ENCODE measurements at regions of chr12 and their contacts with region 1.

Region 1: DNA sequence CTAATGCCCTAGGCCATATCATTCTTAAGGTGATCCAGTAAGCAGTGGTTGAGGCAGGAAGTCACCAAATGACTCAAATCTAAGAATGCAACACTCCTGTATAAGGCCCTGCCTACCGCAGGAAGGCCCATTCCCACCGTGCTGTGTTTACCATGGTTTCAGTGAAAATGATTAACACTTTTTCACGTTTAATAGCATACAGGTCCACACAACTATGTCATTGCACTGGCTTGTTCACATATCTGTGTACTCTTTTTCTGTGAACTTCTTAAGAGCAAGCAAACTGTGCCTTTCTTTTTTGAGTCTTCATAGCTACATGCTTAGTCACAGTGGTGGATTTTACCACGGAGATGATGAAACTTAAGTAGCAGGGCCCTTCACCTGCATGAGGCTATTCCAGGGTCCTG is 214.9 kb downstream of the CNTN1 start:
- DNase-seq: peak; percentile 54
- H3K4me3 Mint-ChIP-seq: no peak overlapping the region
- H3K27ac Mint-ChIP-seq: peak overlapping the region; percentile 59
- H3K4me1 Mint-ChIP-seq: peaks cover 6% of the 10 kb centered on the region
- H3K27me3 Mint-ChIP-seq: no peaks in the 10 kb centered on the region
- CTCF ChIP-seq: no peak

Region 2: DNA sequence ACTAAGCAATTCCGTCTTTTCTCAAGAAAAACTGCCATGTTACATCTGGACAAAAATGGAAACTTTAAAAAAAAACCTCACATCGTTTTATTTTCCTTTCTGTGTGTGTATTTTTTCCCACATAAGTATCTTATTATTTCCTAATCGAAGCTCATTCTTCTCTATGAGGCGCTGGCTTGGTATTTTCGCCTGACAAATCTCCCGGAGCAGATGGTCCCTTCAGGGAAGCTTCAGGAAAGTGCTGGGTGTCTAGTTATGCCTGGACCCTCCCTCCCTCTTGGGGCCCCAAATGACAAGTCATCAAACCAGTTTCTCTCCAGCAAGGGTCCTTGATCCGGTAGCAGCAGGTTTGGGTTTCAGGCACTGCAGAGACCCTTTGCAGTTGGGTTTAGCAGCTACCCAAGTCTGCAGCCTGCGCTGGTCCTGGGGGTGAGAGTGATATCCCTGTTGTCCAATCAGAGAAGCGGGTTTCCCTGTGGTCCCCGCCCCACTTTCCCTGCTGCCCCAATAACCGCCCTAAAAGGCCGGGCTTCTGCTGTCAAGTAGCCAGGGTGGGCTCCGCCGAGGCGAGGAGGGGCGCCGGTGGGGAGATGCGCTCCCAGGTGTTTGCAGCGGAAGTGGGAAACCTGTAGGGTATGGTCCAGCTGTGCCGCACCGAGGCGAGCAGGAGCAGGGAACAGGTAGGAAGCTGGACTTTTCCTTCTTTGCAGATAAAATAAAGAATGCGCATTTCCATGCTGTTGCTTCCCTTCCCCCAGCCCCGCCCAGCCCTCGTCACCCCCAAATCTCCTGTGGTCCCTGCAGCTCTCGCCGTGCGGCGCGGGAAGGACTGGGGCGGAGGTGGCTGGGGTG is 215.0 kb before region 1 on chr12 and contains the start of gene CNTN1:
- CTCF ChIA-PET with region 1: no interaction called
- POLR2A ChIA-PET with region 1: no interaction called
- intact Hi-C with region 1: loop called (anchors 10 kb)
- DNase-seq: peak; percentile 20
- H3K4me3 Mint-ChIP-seq: no peak within 1 kb of the TSS
- H3K27ac Mint-ChIP-seq: no peak within 1 kb of the TSS
- H3K4me1 Mint-ChIP-seq: no peaks in the 10 kb centered on the region
- H3K27me3 Mint-ChIP-seq: peaks cover 50% of the 10 kb centered on the region
- CTCF ChIP-seq: no peak
- total RNA-seq, gene CNTN1: not detected in 2 replicates

Measured in MCF 10A (cell line).